Breast epithelium (tissue), 4 donors: ENCODE measurements at regions of chr14 and their contacts with region 1.

Region 1: DNA sequence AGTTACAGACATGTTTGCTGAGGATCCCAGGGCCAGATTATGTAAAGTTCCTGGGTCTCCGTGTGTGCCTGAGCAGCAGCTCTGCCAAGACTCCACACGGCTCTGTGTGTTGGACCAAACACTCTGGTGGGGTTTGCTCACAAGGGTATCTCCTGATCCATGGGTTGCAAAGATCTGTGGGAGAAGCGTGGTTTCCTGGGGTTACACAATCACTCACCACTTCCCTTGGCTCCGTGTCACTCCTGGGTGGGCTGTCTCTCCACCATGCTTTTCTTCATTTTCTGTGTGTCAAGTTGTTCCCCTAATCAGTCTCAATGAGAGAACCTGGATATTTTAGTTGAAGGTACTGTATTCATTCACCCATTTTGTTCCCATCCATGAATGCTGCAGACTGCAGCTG is 1088.8 kb downstream of the FSCB start:
- DNase-seq: no peak
- H3K4me3 ChIP-seq: no peak overlapping the region
- H3K27ac ChIP-seq: no peak overlapping the region
- H3K4me1 ChIP-seq: no peaks in the 10 kb centered on the region
- H3K27me3 ChIP-seq: no peaks in the 10 kb centered on the region
- CTCF ChIP-seq: no peak
- POLR2A ChIP-seq: no peak

Region 2: GRCh38 chr14:44657696-44658388 is 1239.5 kb after region 1 on chr14:
- intact Hi-C with region 1: no loop called
- DNase-seq: no peak
- H3K4me3 ChIP-seq: no peak overlapping the region
- H3K27ac ChIP-seq: no peak overlapping the region
- H3K4me1 ChIP-seq: no peaks in the 10 kb centered on the region
- H3K27me3 ChIP-seq: no peaks in the 10 kb centered on the region
- CTCF ChIP-seq: peak in 1 of 3 donors; percentile 13
- POLR2A ChIP-seq: no peak

Region 3: GRCh38 chr14:44712024-44712815 is 1293.9 kb after region 1 on chr14:
- intact Hi-C with region 1: loop called (anchors 5 kb)
- DNase-seq: no peak
- H3K4me3 ChIP-seq: no peak overlapping the region
- H3K27ac ChIP-seq: no peak overlapping the region
- H3K4me1 ChIP-seq: no peaks in the 10 kb centered on the region
- H3K27me3 ChIP-seq: no peaks in the 10 kb centered on the region
- CTCF ChIP-seq: no peak
- POLR2A ChIP-seq: no peak